ENCODE measurements at regions of chr18 and their contacts with region 1.

Region 1: GRCh38 chr18:47120428-47120827 is 29.9 kb downstream of the HDHD2 start:
- DNase-seq: no peak
- H3K4me3 Mint-ChIP-seq: no peak overlapping the region
- H3K27ac Mint-ChIP-seq: peak overlapping the region; percentile 26
- H3K4me1 Mint-ChIP-seq: peaks cover 21% of the 10 kb centered on the region
- H3K27me3 Mint-ChIP-seq: no peaks in the 10 kb centered on the region

Region 2: DNA sequence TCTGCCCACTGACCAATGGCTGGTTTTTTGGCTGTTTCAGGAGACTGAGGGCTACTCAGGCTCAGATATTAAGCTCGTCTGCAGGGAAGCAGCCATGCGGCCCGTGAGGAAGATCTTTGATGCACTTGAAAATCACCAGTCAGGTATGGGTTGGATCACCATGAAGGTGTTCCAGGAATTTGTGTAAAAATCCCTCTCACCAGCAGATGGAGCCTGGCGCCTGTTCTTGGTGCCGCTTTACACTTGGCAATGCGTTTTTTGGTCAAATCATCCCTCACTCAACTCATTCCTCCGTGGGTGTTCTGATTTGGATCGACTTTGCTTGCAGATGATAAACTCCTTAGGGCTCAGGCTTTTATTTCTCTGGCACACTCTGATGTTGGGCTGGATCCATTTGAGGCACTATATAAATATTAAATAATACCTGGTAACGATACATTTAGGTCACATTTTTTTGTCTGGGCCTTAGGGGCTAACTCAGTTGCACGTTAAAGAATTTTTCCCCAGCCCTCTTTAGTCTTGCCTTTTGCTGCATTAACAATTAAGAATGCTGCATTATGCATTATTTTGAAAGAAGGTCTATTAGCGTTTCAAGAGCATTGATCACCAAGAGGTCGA is 20.1 kb before region 1 on chr18:
- intact Hi-C with region 1: loop called (anchors 2 kb)
- DNase-seq: peak; percentile 16
- H3K4me3 Mint-ChIP-seq: no peak overlapping the region
- H3K27ac Mint-ChIP-seq: no peak overlapping the region
- H3K4me1 Mint-ChIP-seq: no peaks in the 10 kb centered on the region
- H3K27me3 Mint-ChIP-seq: no peaks in the 10 kb centered on the region

Region 3: DNA sequence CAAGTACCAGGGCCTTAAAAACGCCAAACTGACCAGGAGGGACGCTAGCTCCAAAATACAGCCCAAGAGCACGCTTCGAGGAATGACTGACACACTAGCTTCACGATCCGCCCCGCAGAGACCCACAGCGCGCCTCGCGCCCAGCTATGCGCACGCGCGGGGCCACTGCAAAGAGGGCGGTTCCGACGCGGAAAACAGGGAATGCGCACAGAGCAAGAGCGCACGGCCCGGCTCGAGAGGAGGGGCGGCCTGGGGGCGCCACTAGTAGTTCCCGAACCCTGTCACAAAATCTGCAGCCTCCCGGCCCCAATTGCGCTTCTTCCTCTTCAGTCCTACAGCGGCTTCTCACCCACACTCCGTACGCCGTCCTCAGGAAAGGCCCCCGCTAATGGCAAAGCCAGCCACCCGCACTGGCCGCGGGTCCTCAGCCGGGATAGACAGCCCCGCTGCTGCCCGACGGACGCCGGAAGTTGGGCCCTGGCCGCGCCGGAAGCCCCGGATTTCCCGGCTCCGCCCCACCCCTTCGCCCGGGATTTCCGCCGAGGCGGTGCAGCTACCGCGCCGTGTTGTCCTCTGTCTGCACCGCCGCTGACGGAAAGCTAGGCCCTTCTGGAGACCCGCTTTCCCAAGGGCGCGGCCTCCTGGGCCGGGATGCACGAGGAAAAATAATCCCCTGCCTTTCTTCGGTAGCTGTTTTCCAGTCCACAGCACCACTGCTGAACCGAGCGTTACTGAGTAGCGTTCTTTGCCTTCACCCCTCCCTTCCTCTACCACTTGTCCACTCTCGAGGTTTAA is 29.8 kb after region 1 on chr18 and contains the start of gene HDHD2:
- intact Hi-C with region 1: loop called (anchors 1 kb)
- DNase-seq: peak; percentile 77
- H3K4me3 Mint-ChIP-seq: peak within 1 kb of the TSS; percentile 95
- H3K27ac Mint-ChIP-seq: peak within 1 kb of the TSS; percentile 95
- H3K4me1 Mint-ChIP-seq: peaks cover 35% of the 10 kb centered on the region
- H3K27me3 Mint-ChIP-seq: no peaks in the 10 kb centered on the region
- total RNA-seq, gene HDHD2: 36.8 and 39.4 TPM in 2 replicates

Region 4: DNA sequence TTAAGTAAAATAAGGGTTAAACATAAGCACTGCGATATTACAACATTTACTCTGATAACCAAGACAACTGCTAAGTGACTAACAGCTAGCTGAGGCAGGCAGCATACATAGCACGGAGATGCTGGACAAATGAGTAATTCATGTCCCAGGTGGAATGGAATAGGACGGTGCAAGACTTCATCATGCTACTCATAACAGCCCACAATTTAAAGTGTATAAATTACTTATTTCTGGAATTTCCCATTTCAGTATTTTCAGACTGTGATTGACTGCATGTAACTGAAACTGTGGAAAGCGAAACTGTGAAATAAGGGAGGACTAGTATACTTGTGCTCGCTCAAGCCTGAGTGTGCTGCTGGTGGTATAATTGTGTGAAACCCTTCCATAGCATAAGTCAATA is 42.8 kb after region 1 on chr18:
- intact Hi-C with region 1: loop called (anchors 1 kb)
- DNase-seq: no peak
- H3K4me3 Mint-ChIP-seq: no peak overlapping the region
- H3K27ac Mint-ChIP-seq: no peak overlapping the region
- H3K4me1 Mint-ChIP-seq: peaks cover 27% of the 10 kb centered on the region
- H3K27me3 Mint-ChIP-seq: no peaks in the 10 kb centered on the region

Region 5: DNA sequence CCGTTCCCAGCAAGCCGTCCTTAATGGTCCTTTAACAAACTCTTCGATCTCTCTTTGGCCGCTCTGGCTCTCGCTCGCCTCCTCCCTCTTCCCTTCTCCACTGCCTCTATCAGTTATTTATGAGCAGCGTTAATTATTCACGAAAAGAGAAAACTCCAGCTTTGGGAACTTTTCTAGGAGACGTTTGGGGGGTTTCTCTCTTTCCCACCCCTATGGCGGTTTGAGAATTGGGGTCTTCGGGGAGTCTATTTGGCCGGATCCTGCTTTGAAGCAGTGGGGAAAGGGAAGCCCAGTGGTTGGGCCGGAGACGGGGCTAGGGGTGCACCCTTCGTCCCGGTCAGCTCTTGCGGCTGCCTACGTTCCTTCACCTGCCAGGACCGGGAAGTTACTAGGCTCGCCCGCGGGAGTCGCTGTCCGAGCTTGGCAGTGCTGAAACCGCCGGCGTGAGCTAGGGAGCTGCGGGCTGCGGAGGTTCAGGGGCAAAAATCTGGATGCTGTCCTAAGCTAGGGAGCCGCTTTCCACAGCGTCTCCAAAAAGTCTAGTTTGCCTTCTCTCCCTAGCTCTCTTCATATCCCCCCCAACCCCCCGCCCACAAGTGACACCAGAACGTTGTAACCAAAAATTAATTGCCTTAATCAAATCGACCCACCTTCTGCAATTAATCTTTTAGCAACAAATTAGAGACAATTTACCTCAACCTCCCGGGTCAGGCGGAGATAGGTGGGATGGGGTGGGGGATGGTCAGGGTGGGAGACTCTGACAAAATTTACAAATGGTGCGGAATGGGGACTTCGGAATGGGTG is 139.9 kb after region 1 on chr18:
- intact Hi-C with region 1: no loop called
- DNase-seq: no peak
- H3K4me3 Mint-ChIP-seq: no peak overlapping the region
- H3K27ac Mint-ChIP-seq: no peak overlapping the region
- H3K4me1 Mint-ChIP-seq: no peaks in the 10 kb centered on the region
- H3K27me3 Mint-ChIP-seq: peaks cover 65% of the 10 kb centered on the region

Region 6: GRCh38 chr18:47427923-47428637 is 307.7 kb after region 1 on chr18:
- intact Hi-C with region 1: no loop called
- DNase-seq: no peak
- H3K4me3 Mint-ChIP-seq: no peak overlapping the region
- H3K27ac Mint-ChIP-seq: no peak overlapping the region
- H3K4me1 Mint-ChIP-seq: no peaks in the 10 kb centered on the region
- H3K27me3 Mint-ChIP-seq: peaks cover 5% of the 10 kb centered on the region

Measured in activated T-helper 1 cell treated with anti-CD3 and anti-CD28 coated beads, Interleukin-12 subunit alpha, Interleukin-12 subunit beta, Interleukin-2, Interleukin-4 antibody, amounts not matched to agents 30 ng/mL and 10 ng/mL and 1 ng/mL, durations not matched to agents 14 hours and 24 hours and 36 hours (primary cell).